Panc1 (cell line): ENCODE measurements at regions of chr10 and their contacts with region 1.

Region 1: GRCh38 chr10:60388709-60389301 is 870 bp downstream of the ANK3 start:
- DNase-seq: no peak
- ATAC-seq: no peak
- H3K4me3 ChIP-seq: no peak overlapping the region
- H3K27ac ChIP-seq: no peak overlapping the region
- H3K4me1 ChIP-seq: no peaks in the 10 kb centered on the region
- H3K27me3 ChIP-seq: no peaks in the 10 kb centered on the region
- CTCF ChIP-seq: no peak

Region 2: GRCh38 chr10:60367431-60367830 is 21.4 kb before region 1 on chr10:
- CTCF ChIA-PET with region 1: no interaction called
- POLR2A ChIA-PET with region 1: no interaction called
- in situ Hi-C with region 1: no loop called
- intact Hi-C with region 1: no loop called
- DNase-seq: no peak
- ATAC-seq: no peak
- H3K4me3 ChIP-seq: no peak overlapping the region
- H3K27ac ChIP-seq: no peak overlapping the region
- H3K4me1 ChIP-seq: no peaks in the 10 kb centered on the region
- H3K27me3 ChIP-seq: peaks cover 7% of the 10 kb centered on the region
- CTCF ChIP-seq: no peak

Region 3: DNA sequence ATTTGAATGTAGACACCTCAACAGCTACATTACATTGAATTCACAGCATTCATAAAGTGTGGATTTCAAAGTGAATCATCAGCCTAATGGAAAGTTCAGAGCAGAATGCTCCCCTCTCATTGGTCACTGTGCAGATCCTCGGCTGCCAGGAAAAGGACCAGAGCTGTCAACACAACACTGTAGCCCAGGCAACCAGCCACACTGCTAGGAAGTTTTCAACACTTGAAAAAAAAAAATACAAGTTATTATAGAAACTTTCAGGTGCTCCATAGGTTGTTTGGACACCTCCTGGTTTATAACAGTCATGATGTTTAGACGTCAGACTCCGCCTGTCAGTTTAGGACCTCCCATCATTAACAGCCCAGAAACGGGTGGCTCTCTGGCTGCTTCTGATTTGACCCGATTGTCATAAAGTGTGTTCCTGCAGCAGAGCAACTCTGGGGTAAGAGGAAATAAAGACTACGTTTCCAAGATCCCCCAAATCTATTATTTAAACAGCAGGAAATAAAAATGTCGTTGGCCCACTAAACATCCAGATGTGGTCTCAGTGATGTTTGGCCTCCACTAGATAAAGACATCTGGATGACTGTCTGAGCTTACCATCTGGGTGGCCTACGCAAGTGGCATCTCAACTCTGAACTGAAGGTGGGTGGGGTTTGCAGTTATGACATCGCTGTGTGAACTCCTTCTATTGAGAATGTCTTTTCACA is 1391.3 kb after region 1 on chr10:
- CTCF ChIA-PET with region 1: no interaction called
- POLR2A ChIA-PET with region 1: interaction called, 14 read pairs
- in situ Hi-C with region 1: no loop called
- intact Hi-C with region 1: no loop called
- DNase-seq: no peak
- ATAC-seq: peak; percentile 63; the same call in 1 of the 2 replicates
- H3K4me3 ChIP-seq: no peak overlapping the region
- H3K27ac ChIP-seq: peak overlapping the region; percentile 8; the same call in 1 of the 2 replicates
- H3K4me1 ChIP-seq: no peaks in the 10 kb centered on the region
- H3K27me3 ChIP-seq: no peaks in the 10 kb centered on the region
- CTCF ChIP-seq: no peak